ENCODE measurements at regions of chr22 and their contacts with region 1.

Region 1: DNA sequence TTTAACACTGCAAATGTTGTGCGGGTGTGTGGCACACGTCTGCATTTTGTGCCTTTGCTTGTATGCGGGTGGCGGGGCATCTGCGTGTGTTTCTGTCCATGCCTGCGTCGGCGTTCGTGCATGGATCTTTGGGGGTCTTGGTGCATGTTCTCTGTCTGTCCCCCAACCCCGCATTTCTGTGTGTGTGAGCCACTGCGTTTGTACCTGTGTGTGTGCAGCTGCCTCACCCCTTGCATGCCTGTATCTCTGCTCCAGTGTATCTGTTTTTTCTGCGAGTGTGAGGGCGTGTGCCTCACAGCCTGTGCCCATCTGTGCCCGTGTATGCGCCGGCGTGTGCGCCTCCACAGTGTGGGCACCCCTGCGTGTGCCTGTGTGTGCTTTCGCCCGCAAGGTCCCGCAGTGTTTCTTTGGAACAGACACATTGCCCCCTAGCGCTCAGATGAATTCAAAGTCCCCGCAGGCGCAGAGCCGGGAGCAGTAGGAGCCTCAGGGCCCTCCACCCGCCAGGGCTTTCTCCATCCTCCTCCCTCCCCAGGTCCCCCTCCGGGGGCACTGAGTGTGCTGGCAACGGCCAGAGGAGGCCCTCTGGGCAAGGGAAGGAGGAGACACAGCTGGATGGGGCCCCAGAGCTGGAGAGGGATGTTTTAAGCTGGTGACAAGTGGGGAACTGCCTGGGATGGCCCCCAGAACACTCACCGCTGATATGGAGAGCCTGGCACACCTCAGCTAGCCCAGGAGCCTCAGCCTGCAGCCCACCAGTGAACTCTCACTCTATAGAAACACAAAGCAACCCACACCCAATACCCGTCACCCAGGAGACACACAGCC is 3.1 kb upstream of the MN1 start:
- DNase-seq: peak; percentile 89
- H3K4me3 ChIP-seq: no peak overlapping the region
- H3K27ac ChIP-seq: no peak overlapping the region
- H3K4me1 ChIP-seq: no peaks in the 10 kb centered on the region
- H3K27me3 ChIP-seq: no peaks in the 10 kb centered on the region

Region 2: DNA sequence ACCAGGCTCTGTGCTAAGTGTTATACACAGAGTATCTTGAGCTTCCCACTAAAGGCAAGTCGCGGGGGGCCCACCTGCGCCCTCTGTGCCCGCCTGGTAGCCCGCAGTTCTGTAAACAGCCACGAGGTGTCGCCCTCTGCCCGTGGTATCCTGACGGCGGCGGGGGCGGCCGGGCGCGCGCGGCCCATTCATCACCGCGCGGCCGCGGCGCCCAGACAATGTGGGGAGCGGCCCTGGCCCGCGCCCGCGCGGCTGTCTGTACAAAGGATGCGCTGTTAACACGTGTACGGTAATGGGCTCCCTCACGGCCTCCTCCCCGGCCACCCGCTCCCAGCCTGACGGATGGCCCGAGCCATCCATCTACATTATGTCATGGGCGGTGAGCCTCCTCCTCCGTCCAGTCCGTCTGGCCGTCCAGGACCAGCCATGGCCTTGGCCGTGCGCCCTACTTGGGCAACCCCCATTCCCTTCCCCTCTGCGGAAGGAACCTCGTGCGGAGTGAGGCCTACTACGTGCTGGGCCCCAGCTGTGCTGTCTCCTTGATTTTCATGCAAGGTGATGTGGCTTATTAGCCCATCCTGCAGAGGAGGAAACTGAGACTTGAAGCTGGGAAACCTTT is 1047.9 kb before region 1 on chr22:
- in situ Hi-C with region 1: loop called (anchors 10 kb)
- DNase-seq: peak; percentile 87
- H3K4me3 ChIP-seq: peak overlapping the region; percentile 43
- H3K27ac ChIP-seq: peak overlapping the region; percentile 42; the same call in 1 of the 2 replicates
- H3K4me1 ChIP-seq: no peaks in the 10 kb centered on the region
- H3K27me3 ChIP-seq: no peaks in the 10 kb centered on the region

Region 3: DNA sequence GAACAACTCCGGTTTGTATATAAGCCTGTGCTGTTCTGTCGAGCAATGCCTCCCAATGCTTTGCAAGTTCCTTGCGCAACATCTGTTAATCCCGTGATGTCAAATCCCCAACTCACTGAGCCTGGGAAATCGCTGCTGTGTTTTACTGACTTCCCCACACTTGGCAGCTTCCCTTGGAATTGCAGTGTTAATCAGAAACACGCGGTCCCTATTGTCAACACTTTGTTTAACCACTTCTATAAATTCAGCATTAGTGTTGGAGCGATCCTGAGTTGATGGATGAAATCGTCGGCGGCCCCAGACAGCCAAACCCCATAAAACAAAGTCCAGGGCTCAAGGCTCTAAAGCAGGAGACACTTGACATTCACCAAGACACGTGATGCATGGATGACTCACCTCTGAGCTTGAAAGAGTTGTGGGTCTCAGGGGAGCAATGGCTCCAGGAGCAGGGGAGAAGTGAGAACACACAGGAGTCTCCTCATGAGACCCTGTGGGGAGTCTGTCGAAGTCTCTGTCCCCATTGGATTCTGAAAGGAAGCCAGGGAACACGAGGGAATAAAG is 592.0 kb before region 1 on chr22:
- in situ Hi-C with region 1: loop called (anchors 25 kb)
- DNase-seq: peak; percentile 100
- H3K4me3 ChIP-seq: no peak overlapping the region
- H3K27ac ChIP-seq: peak overlapping the region; percentile 93
- H3K4me1 ChIP-seq: peaks cover 31% of the 10 kb centered on the region
- H3K27me3 ChIP-seq: no peaks in the 10 kb centered on the region

Region 4: GRCh38 chr22:27405672-27406388 is 398.9 kb before region 1 on chr22:
- in situ Hi-C with region 1: loop called (anchors 10 kb)
- DNase-seq: peak; percentile 74
- H3K4me3 ChIP-seq: no peak overlapping the region
- H3K27ac ChIP-seq: no peak overlapping the region
- H3K4me1 ChIP-seq: 0 out of 2 replicates have a peak, but pooled peaks cover 3% of the 10 kb centered on the region
- H3K27me3 ChIP-seq: no peaks in the 10 kb centered on the region

Region 5: DNA sequence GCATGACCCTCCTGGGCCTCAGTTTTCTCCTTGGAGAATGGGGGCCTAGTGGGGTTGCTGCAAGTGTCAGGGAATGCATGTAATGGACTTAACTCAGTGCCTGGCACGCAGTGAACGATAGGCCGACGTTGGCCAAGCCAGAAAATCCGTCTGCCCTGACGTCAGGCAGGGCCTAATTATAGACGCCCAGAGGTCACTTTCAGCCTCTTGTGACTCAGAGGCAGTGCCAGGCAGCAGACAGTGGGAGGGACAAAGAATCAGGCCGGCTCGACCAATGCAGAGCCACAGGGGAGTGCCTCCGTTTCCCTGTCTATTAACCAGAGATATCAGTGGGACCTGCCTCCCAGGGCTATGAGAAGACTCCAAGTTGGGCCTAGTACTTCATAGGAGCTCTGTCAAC is 118.2 kb before region 1 on chr22:
- in situ Hi-C with region 1: no loop called
- DNase-seq: peak; percentile 92
- H3K4me3 ChIP-seq: no peak overlapping the region
- H3K27ac ChIP-seq: peak overlapping the region; percentile 22; the same call in 1 of the 2 replicates
- H3K4me1 ChIP-seq: peaks cover 10% of the 10 kb centered on the region
- H3K27me3 ChIP-seq: no peaks in the 10 kb centered on the region

Region 6: DNA sequence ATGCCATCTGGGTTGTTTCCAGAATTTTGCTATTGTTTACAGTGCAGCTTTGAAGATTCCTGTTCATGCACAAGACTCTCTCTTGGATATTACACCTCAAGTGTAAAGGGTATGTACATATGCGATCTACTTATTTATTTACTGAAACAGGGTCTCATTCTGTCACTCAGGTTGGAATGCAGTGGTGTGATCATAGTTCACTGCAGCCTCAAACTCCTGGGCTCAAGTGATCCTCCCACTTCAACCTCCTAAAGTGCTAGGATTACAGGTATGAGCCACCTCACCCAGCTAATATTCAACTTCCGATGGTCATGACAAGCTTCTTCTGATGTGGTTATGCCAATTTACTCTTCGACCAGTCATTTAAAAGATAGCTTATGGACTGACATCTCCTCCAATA is 272.5 kb after region 1 on chr22:
- in situ Hi-C with region 1: no loop called
- DNase-seq: no peak
- H3K4me3 ChIP-seq: no peak overlapping the region
- H3K27ac ChIP-seq: no peak overlapping the region
- H3K4me1 ChIP-seq: peaks cover 17% of the 10 kb centered on the region; the same call in 1 of the 2 replicates
- H3K27me3 ChIP-seq: no peaks in the 10 kb centered on the region